A549 (cell line): ENCODE measurements at regions of chr4 and their contacts with region 1.

Region 1: DNA sequence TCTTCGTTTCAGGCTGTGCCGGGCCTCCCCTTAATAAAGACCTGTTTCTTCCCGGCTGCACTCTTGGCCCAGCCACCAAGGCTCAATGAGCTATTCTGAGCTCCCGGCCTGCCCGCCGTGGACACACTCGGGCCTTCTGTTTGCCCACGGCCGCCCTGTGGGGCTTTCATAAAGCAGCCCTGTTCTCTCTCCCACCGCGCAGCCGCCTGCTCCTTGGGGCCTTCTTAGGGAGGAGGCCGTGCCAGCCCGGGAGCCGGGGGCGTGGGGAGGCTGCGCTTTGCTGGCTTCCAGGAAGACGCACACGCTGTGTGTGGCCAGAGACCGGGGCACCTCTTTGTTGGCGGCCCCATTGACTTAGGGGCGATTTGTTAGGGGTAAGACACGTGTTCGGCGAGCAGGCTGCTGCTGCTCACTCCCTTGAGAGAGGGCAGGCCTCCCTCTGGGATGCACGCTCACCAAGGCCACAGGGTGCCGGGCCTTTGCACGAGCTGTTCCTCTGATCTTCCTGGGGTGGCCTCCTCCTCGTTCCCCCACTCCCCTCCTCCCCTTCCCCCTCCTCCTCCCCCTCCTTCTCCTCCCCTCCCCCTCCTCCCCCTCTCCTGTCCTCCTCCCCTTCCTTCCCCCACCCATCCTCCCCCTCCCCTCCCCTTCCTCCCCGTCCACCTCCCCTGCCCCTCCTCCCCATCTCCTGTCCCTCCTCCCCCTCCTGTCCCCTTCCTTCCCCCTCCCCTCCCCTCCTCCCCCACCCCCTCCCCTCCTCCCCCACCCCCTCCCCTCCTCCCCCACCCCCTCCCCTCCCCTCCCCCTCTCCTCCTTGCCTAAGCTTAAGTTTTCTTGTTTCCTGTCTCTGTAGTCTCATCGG is 11.3 kb downstream of the BLOC1S4 start:
- DNase-seq: no peak
- ATAC-seq: no peak
- H3K4me3 ChIP-seq: no peak overlapping the region
- H3K27ac ChIP-seq: peak overlapping the region in 1 of 2 experiments; percentile 56; a peak in 3 of 6 replicates
- H3K4me1 ChIP-seq: peaks cover 5% of the 10 kb centered on the region
- CTCF ChIP-seq: no peak
- EP300 ChIP-seq: no peak
- POLR2A ChIP-seq: no peak
- RAD21 ChIP-seq: no peak

Region 2: GRCh38 chr4:6608758-6609414 is 118.4 kb before region 1 on chr4:
- CTCF ChIA-PET with region 1: no interaction called
- POLR2A ChIA-PET with region 1: interaction called, 10 read pairs
- DNase-seq: peak in 1 of 2 experiments; percentile 10
- ATAC-seq: peak in 1 of 2 experiments; percentile 50; a peak in 3 of 6 replicates
- H3K4me3 ChIP-seq: no peak overlapping the region
- H3K27ac ChIP-seq: no peak overlapping the region
- H3K4me1 ChIP-seq: no peaks in the 10 kb centered on the region
- CTCF ChIP-seq: no peak
- EP300 ChIP-seq: no peak
- POLR2A ChIP-seq: no peak
- RAD21 ChIP-seq: no peak

Region 3: GRCh38 chr4:7042697-7043464 is 315.6 kb after region 1 on chr4 and contains the start of gene TADA2B:
- CTCF ChIA-PET with region 1: no interaction called
- POLR2A ChIA-PET with region 1: no interaction called
- DNase-seq: peak; percentile 94 to 95
- ATAC-seq: peak; percentile 93 to 97
- H3K4me3 ChIP-seq: peak within 1 kb of the TSS; percentile 99
- H3K27ac ChIP-seq: peak within 1 kb of the TSS; percentile 96 to 98
- H3K4me1 ChIP-seq: peaks cover 8% of the 10 kb centered on the region; the same call in 2 of the 3 replicates
- CTCF ChIP-seq: peak; percentile 57
- EP300 ChIP-seq: no peak
- POLR2A ChIP-seq: peak; percentile 47
- RAD21 ChIP-seq: no peak
- polyA plus RNA-seq, gene TADA2B: 6.0 and 6.7 TPM in 2 replicates